PC-3 (cell line): ENCODE measurements at regions of chr20 and their contacts with region 1.

Region 1: GRCh38 chr20:51910321-51911053 is 108.2 kb upstream of the SALL4 start:
- DNase-seq: peak; percentile 88
- ATAC-seq: peak; percentile 94
- H3K4me3 ChIP-seq: peak overlapping the region; percentile 55
- H3K27ac ChIP-seq: peak overlapping the region; percentile 66
- H3K4me1 ChIP-seq: peaks cover 30% of the 10 kb centered on the region
- H3K27me3 ChIP-seq: no peaks in the 10 kb centered on the region
- CTCF ChIP-seq: no peak

Region 2: GRCh38 chr20:51661609-51662178 is 248.8 kb before region 1 on chr20:
- CTCF ChIA-PET with region 1: no interaction called
- POLR2A ChIA-PET with region 1: no interaction called
- intact Hi-C with region 1: loop called (anchors 5 kb)
- DNase-seq: peak; percentile 99
- ATAC-seq: peak; percentile 60
- H3K4me3 ChIP-seq: no peak overlapping the region
- H3K27ac ChIP-seq: peak overlapping the region; percentile 88
- H3K4me1 ChIP-seq: peaks cover 55% of the 10 kb centered on the region
- H3K27me3 ChIP-seq: no peaks in the 10 kb centered on the region
- CTCF ChIP-seq: no peak

Region 3: DNA sequence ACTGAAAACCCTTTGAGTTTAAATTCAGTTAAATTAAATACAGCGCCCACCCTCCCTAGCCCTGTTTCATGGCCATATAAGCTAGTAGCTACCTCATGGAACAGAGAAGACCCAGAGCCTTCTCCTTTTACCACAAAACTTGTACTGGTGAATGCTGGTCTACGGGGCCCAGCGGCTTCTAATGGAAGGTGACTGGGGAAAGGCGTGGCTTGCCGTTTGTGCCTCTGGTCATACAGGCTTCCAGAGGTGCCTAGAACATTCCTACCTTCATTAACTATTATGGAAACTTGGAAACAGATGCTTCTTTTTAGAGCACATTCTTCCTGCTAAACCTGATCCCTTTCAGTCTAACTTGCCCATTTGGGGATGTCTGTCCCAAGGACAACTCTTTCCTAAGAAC is 233.2 kb before region 1 on chr20:
- CTCF ChIA-PET with region 1: no interaction called
- POLR2A ChIA-PET with region 1: no interaction called
- intact Hi-C with region 1: no loop called
- DNase-seq: no peak
- ATAC-seq: no peak
- H3K4me3 ChIP-seq: no peak overlapping the region
- H3K27ac ChIP-seq: no peak overlapping the region
- H3K4me1 ChIP-seq: no peaks in the 10 kb centered on the region
- H3K27me3 ChIP-seq: no peaks in the 10 kb centered on the region
- CTCF ChIP-seq: no peak

Region 4: DNA sequence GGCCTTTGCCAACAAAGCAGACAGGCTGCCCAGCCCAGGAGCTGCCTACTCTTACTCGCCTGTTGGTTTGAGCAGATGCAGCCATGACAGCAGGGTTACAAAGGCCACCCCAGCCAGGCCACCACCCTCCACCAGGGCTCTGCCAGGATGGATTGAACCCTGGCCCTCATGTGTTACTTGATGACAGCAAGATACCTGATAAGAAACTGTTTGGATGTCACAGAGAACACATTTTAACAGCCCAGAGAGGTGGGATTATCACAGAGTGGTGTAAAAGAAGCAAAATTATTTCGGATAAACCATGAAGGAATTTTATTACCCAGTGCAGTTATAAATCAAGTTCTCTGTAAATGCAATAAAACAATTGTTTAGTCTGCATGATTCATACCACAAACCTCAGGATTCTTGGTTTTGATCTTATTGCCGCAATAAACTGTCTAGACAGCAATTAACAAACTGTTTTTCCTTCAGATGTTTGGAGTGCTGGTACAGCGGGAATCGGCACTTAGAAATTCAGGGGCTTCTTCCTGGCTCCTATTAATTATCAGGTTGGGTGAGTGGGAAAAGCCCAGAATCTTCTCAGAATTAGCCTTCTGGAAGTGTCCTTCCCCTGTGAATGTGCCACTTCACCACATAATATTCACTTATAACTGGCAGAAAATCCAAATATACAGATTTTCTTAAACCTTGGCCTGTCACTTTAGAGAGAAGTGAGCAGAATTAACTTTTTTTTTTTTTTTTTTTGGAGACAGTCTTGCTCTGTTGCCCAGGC is 50.2 kb before region 1 on chr20:
- CTCF ChIA-PET with region 1: no interaction called
- POLR2A ChIA-PET with region 1: no interaction called
- intact Hi-C with region 1: loop called (anchors 1 kb)
- DNase-seq: peak; percentile 84
- ATAC-seq: peak; percentile 91
- H3K4me3 ChIP-seq: no peak overlapping the region
- H3K27ac ChIP-seq: no peak overlapping the region
- H3K4me1 ChIP-seq: peaks cover 12% of the 10 kb centered on the region
- H3K27me3 ChIP-seq: peaks cover 3% of the 10 kb centered on the region; the same call in 1 of the 2 replicates
- CTCF ChIP-seq: no peak

Region 5: GRCh38 chr20:51934301-51935002 is 24.0 kb after region 1 on chr20:
- CTCF ChIA-PET with region 1: no interaction called
- POLR2A ChIA-PET with region 1: no interaction called
- intact Hi-C with region 1: loop called (anchors 1 kb)
- DNase-seq: peak; percentile 82
- ATAC-seq: peak; percentile 81
- H3K4me3 ChIP-seq: peak overlapping the region; percentile 52
- H3K27ac ChIP-seq: no peak overlapping the region
- H3K4me1 ChIP-seq: peaks cover 38% of the 10 kb centered on the region
- H3K27me3 ChIP-seq: no peaks in the 10 kb centered on the region
- CTCF ChIP-seq: no peak

Region 6: GRCh38 chr20:51984931-51985415 is 74.5 kb after region 1 on chr20:
- CTCF ChIA-PET with region 1: no interaction called
- POLR2A ChIA-PET with region 1: no interaction called
- intact Hi-C with region 1: loop called (anchors 1 kb)
- DNase-seq: peak; percentile 99
- ATAC-seq: peak; percentile 95
- H3K4me3 ChIP-seq: no peak overlapping the region
- H3K27ac ChIP-seq: peak overlapping the region; percentile 36
- H3K4me1 ChIP-seq: peaks cover 13% of the 10 kb centered on the region
- H3K27me3 ChIP-seq: no peaks in the 10 kb centered on the region
- CTCF ChIP-seq: no peak

Region 7: DNA sequence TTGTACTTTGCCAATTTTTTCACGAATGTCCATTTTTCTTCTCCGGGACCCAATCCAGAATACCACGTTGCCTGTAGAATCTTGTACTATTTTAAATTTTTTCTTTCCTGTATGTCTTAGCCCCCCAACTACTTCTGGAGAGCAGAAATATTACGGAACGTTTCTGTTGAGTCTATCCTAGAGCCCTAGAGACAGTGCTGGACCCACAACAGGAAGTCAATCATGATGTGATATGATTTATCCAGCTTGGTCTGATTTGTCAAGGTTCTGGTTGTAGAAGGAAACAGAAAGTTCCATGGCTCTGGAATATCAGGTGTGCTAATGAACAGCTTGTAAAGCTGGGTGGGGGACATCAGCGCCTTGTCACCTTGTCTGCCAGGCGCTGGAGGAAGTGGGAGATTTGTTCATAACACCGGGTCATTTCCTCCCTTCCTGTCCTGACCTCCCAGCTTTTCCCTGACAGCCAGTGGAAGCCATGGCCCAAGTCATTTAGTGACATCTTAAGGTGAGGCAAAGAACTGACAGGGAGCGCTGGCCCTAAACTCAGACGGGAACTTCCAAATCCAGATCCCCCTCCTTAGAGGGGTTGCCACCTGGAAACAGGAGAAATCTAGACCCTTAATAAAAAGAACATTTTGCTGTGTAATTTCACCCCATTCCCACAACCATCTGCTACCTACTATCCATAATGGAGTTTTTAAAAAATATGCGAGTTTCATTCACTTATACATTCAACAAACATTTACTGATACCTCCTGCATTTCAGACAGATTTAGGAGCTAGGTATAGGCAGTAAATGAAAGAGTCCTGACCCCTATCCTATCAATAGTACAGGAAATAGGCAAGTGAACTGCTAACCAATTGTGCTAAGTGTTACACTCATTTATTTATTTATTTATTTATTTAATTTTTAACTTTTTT is 150.6 kb after region 1 on chr20:
- CTCF ChIA-PET with region 1: no interaction called
- POLR2A ChIA-PET with region 1: no interaction called
- intact Hi-C with region 1: loop called (anchors 2 kb)
- DNase-seq: peak; percentile 84
- ATAC-seq: peak; percentile 72
- H3K4me3 ChIP-seq: no peak overlapping the region
- H3K27ac ChIP-seq: no peak overlapping the region
- H3K4me1 ChIP-seq: peaks cover 9% of the 10 kb centered on the region
- H3K27me3 ChIP-seq: no peaks in the 10 kb centered on the region
- CTCF ChIP-seq: peak; percentile 96